ENCODE measurements at regions of chr15 and their contacts with region 1.

Region 1: GRCh38 chr15:38683382-38684242 is 119.0 kb upstream of the RASGRP1 start:
- DNase-seq: peak; percentile 85
- ATAC-seq: peak; percentile 77
- H3K4me3 Mint-ChIP-seq: no peak overlapping the region
- H3K27ac Mint-ChIP-seq: peak overlapping the region; percentile 94
- H3K4me1 Mint-ChIP-seq: peaks cover 73% of the 10 kb centered on the region
- H3K27me3 Mint-ChIP-seq: no peaks in the 10 kb centered on the region
- CTCF ChIP-seq: peak; percentile 90

Region 2: GRCh38 chr15:38479266-38479665 is 204.3 kb before region 1 on chr15:
- CTCF ChIA-PET with region 1: interaction called, 108 read pairs
- POLR2A ChIA-PET with region 1: no interaction called
- intact Hi-C with region 1: no loop called
- DNase-seq: no peak
- ATAC-seq: no peak
- H3K4me3 Mint-ChIP-seq: no peak overlapping the region
- H3K27ac Mint-ChIP-seq: no peak overlapping the region
- H3K4me1 Mint-ChIP-seq: peaks cover 27% of the 10 kb centered on the region
- H3K27me3 Mint-ChIP-seq: no peaks in the 10 kb centered on the region
- CTCF ChIP-seq: no peak

Region 3: DNA sequence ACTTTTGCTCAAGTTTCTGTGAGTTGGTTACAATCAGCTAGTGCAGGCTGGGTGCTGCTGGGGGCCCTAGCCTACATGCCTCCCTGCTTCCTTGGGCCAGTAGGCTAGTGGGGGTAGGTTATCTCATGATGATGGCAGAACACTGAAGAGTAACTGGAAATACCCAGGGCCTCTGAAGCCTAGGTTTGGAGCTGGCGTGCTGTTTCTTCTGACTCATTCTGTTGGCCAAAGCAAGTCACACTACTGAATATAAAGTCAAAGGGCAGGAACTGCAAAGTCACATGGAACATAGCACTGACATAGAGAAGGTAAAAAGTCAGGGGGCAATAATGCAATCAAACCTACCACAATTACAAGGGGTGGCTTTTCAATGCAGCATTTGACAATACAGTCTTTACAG is 153.5 kb before region 1 on chr15:
- CTCF ChIA-PET with region 1: interaction called, 68 read pairs
- POLR2A ChIA-PET with region 1: interaction called, 16 read pairs
- intact Hi-C with region 1: no loop called
- DNase-seq: peak; percentile 79
- ATAC-seq: peak; percentile 93
- H3K4me3 Mint-ChIP-seq: peak overlapping the region; percentile 28
- H3K27ac Mint-ChIP-seq: peak overlapping the region; percentile 97
- H3K4me1 Mint-ChIP-seq: peaks cover 98% of the 10 kb centered on the region
- H3K27me3 Mint-ChIP-seq: no peaks in the 10 kb centered on the region
- CTCF ChIP-seq: no peak

Region 4: DNA sequence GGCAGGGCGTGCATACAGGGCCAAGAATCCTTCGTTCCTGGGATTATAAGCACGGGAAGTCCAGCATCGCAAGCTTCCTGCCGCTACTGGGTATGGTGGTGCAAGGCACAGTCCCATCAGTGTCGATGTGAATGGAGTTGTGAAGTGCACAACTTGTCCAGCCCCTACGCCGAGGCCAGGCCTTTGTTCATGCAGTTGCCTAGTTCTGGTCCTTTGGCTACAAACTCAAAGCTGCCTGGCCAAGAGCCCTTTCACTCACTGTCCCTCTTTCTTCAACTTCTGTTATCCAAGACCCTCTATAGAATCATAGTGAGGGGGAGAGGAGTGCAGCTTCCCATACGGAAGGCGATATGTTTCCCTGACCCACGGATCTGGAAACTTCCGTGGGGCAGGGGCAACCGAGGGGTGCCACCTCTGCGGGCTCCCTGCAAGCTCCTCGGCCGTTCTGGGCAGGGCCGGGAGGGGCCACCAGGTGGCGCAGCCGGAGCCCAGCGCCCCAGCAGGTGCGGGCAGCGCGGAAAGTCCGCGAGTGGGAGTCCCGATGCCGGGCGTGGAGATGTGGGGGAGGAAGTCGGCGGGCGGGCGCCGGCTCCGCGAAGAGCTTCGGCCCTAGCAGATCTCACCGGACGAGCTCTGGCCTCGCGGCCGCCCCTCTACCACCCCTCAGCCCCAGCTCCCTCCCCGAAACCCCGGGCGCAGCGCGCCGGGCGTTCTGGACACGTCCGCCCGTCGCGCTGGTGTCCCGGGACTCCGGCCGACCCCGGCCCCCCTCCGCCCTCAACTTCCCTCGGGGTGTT is 119.7 kb before region 1 on chr15:
- CTCF ChIA-PET with region 1: interaction called, 464 read pairs
- POLR2A ChIA-PET with region 1: interaction called, 192 read pairs
- intact Hi-C with region 1: loop called (anchors 2 kb)
- DNase-seq: peak; percentile 89
- ATAC-seq: peak; percentile 63
- H3K4me3 Mint-ChIP-seq: peak overlapping the region; percentile 83
- H3K27ac Mint-ChIP-seq: peak overlapping the region; percentile 96
- H3K4me1 Mint-ChIP-seq: peaks cover 52% of the 10 kb centered on the region
- H3K27me3 Mint-ChIP-seq: no peaks in the 10 kb centered on the region
- CTCF ChIP-seq: peak; percentile 96

Region 5: DNA sequence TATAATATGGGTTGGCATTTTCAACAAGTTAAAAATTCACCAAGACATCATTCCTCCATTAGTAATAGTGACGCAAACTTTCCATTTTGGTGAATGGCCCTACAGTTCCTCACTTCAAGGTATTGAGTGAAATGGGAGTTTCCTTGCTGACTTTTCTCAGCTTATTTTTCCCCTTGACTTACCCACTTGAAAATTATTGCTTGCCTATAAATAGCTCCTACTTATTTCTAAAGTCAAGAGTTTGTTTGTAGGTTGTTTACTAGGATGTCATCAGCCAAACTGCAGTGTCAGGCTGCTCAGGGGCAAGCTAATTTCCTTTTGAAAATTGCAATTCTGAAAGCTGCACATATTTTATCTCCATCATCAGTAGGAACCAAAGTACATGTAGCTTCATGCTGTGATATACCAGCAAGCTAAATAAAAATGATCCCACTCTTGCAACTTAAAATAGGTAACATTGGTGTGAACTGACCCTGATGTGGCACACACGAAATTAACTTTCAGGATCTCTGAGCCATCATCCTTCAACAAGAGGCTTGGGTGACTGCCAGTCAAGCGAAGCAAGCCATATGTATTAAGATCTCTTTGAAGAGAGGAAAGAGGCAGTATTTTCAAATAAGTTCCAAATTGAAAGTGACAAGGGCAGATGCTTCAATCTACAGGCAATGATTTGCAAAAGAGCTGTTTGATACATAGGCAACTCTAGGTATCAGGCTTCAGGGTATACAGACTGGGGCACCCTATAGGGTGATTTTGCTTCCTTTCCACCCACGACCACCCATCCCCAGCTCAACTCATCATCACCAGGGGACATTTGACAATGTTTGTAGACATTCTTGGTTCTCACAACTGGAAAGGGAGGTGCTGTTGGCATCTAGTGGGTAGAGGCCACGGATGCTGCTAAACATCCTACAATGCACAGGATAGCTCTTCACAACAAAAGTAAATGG is 52.2 kb before region 1 on chr15:
- CTCF ChIA-PET with region 1: interaction called, 11 read pairs
- POLR2A ChIA-PET with region 1: interaction called, 5 read pairs
- intact Hi-C with region 1: no loop called
- DNase-seq: peak; percentile 54
- ATAC-seq: peak; percentile 68
- H3K4me3 Mint-ChIP-seq: peak overlapping the region; percentile 33
- H3K27ac Mint-ChIP-seq: peak overlapping the region; percentile 93
- H3K4me1 Mint-ChIP-seq: peaks cover 56% of the 10 kb centered on the region
- H3K27me3 Mint-ChIP-seq: no peaks in the 10 kb centered on the region
- CTCF ChIP-seq: no peak

Region 6: GRCh38 chr15:38671675-38672254 is 11.8 kb before region 1 on chr15:
- CTCF ChIA-PET with region 1: interaction called, 111 read pairs
- POLR2A ChIA-PET with region 1: interaction called, 94 read pairs
- intact Hi-C with region 1: loop called (anchors 2 kb)
- DNase-seq: peak; percentile 72
- ATAC-seq: peak; percentile 61
- H3K4me3 Mint-ChIP-seq: peak overlapping the region; percentile 62
- H3K27ac Mint-ChIP-seq: peak overlapping the region; percentile 95
- H3K4me1 Mint-ChIP-seq: peaks cover 75% of the 10 kb centered on the region
- H3K27me3 Mint-ChIP-seq: no peaks in the 10 kb centered on the region
- CTCF ChIP-seq: no peak